ENCODE measurements at regions of chr11 and their contacts with region 1.

Region 1: DNA sequence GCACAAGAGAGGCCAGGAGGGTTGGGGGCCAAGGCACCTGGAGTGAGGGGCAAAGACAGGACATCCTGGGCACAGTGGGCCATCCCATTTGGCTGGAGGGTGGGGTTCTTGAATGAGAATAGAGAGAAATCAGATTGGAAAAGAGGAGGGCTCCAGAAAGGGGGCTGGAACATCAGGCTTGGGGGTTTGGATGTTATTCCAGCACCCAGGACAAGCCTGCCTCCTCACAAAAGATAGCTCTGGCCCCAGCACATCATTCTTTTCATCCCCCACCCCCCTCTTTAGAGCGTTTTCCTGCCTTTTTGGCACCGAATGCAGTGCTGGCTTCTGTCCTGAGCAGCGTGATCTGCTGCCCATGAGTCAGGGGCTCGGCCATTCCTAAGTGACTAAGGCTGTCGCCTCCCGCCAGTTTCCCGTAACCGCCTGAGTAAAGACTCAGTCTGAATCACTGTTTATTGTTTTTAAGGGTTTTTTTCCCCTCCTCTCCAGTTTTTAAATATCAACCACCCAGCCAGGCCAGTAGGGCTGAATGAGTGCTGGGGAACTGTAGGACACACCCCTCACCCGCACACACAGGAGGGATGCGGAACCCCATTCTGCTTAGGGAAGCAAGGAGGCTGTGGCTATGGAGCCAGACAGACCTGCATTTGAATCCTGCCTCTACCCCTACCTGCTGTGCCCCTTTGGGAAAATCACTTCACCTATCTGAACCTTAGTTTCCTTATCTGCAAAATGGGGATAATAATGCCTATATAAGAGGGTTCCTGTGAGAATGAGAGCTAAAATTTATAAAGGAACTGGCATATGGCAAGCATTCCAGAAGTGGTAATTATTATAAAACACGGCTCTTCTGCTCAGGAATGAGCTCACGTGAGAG is 32.4 kb upstream of the NAV2 start:
- DNase-seq: peak; percentile 97
- H3K4me3 ChIP-seq: peak overlapping the region in 2 of 4 donors; percentile 2 to 20
- H3K27ac ChIP-seq: peak overlapping the region; percentile 85 to 92 (median 88)
- H3K4me1 ChIP-seq: peaks cover 63 to 90% (median 85%) of the 10 kb centered on the region in 4 donors
- H3K27me3 ChIP-seq: no peaks in the 10 kb centered on the region
- CTCF ChIP-seq: peak in 2 of 3 experiments; percentile 9 to 12
- EP300 ChIP-seq: peak; percentile 85
- POLR2A ChIP-seq: no peak

Region 2: DNA sequence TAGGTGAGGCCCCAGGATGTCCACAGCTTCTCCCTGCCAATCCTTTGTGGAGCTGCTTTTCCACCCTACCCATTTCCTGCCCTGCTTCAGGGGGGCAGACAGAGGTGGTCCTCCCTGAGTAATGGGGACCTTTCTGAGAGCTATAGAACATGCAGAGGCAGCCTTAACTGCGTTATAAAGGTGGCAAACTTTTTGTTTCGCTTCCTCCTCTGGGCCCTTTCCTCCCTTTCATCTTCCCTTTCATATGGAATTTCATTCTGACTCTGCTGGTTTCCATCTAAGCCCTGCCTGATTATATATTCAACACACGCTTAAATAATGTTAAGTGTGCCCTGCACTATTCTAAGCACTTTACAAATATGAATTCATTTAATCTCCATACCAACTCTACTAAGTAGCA is 270.2 kb before region 1 on chr11:
- intact Hi-C with region 1: no loop called
- DNase-seq: no peak
- H3K4me3 ChIP-seq: no peak overlapping the region
- H3K27ac ChIP-seq: no peak overlapping the region
- H3K4me1 ChIP-seq: no peaks in the 10 kb centered on the region
- H3K27me3 ChIP-seq: peaks cover 0 to 32% (median 0%) of the 10 kb centered on the region in 4 donors
- CTCF ChIP-seq: no peak
- EP300 ChIP-seq: no peak
- POLR2A ChIP-seq: no peak

Region 3: GRCh38 chr11:19460718-19461405 is 219.3 kb before region 1 on chr11:
- intact Hi-C with region 1: no loop called
- DNase-seq: no peak
- H3K4me3 ChIP-seq: no peak overlapping the region
- H3K27ac ChIP-seq: no peak overlapping the region
- H3K4me1 ChIP-seq: peaks cover 6 to 10% (median 8%) of the 10 kb centered on the region in 4 donors
- H3K27me3 ChIP-seq: no peaks in the 10 kb centered on the region
- CTCF ChIP-seq: no peak
- EP300 ChIP-seq: no peak
- POLR2A ChIP-seq: no peak

Region 4: DNA sequence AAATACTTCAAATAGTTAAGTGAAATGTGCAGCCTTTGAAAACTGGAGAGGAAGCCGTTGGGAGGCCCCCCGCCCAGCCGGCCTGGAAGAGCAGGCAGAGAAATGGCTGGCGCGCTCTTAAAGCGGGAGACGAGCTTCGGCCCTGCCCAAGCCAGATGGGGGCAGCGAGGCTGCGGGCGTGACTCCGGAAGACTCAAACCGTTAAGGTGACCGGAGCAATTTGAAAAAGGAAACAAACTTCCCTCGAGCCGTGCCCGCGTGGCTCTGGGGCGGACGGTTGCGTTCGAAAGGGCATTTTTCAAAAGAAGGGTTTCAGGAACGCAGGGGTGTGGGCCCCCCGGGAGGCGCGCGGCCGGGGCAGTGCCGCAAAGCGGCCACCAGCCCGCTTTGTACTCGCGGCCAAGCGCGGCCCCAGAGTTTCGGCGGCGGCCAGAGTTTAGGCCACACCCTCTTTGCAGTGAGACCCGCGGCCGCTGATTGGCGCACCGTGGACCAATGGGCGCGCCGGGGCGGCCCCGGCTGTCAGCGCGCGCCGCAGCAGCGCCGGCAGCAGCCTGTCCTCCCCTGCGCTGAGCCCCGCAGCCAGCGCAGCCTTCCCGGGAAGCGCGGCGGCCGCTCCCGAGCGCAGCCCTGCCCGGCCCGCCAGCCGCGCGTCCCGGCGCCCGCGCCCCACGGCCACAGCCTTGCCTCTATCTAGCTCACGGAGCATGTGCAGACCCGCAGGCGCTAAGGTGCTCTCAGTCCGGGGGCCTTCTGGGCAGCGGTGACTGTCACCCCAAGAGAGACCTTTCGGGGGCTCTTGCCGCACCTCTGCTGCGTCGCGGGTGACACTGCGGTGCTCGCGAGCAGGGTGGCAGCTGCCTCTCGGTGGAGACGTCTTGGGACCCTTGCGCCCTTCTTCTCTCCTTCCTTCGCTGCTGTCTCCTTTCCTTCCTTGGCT is 32.4 kb after region 1 on chr11 and contains the start of gene NAV2:
- intact Hi-C with region 1: loop called (anchors 5 kb)
- DNase-seq: peak; percentile 96
- H3K4me3 ChIP-seq: peak within 1 kb of the TSS; percentile 76 to 88 (median 79)
- H3K27ac ChIP-seq: peak within 1 kb of the TSS; percentile 92 to 97 (median 96)
- H3K4me1 ChIP-seq: peaks cover 38 to 68% (median 60%) of the 10 kb centered on the region in 4 donors
- H3K27me3 ChIP-seq: no peaks in the 10 kb centered on the region
- CTCF ChIP-seq: peak in 2 of 3 experiments; percentile 5 to 16
- EP300 ChIP-seq: no peak
- POLR2A ChIP-seq: peak; percentile 88
- total RNA-seq, gene NAV2: 21.9 to 57.0 (median 37.5) TPM

Measured in esophagus muscularis mucosa (tissue), 4 donors.